Spleen (tissue), 13 donors: ENCODE measurements at regions of chr3 and their contacts with region 1.

Region 1: GRCh38 chr3:181709537-181710279 is 2.0 kb upstream of the SOX2 start:
- DNase-seq: peak; percentile 86
- H3K4me3 ChIP-seq: peak overlapping the region in 1 of 8 donors; percentile 20
- H3K27ac ChIP-seq: no peak overlapping the region
- H3K4me1 ChIP-seq: peaks cover 13 to 40% (median 35%) of the 10 kb centered on the region in 6 donors
- H3K27me3 ChIP-seq: peaks cover 21 to 100% (median 98%) of the 10 kb centered on the region in 7 donors
- CTCF ChIP-seq: peak in 10 of 11 experiments; percentile 51 to 84 (median 70)
- POLR2A ChIP-seq: no peak

Region 2: DNA sequence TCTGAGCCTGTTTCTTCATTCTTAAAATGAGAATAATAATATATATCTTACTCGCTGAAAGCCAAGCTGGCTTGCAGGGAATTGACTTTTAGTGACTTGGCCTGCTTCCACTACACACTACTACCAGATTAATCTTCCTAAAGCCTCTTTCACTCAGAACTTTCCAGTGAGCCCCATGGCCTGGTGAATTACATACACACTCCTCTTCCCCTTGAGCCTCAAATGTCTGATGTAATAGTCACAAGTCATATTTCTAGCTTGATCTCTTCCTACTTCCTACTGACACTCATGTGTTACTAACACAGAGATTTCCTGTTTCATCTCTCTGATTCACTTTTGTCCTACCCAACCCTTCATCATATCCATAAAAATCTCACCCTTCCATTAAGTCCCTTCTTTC is 80.7 kb before region 1 on chr3:
- intact Hi-C with region 1: no loop called
- DNase-seq: no peak
- H3K4me3 ChIP-seq: no peak overlapping the region
- H3K27ac ChIP-seq: no peak overlapping the region
- H3K4me1 ChIP-seq: no peaks in the 10 kb centered on the region
- H3K27me3 ChIP-seq: no peaks in the 10 kb centered on the region
- CTCF ChIP-seq: no peak
- POLR2A ChIP-seq: no peak

Region 3: DNA sequence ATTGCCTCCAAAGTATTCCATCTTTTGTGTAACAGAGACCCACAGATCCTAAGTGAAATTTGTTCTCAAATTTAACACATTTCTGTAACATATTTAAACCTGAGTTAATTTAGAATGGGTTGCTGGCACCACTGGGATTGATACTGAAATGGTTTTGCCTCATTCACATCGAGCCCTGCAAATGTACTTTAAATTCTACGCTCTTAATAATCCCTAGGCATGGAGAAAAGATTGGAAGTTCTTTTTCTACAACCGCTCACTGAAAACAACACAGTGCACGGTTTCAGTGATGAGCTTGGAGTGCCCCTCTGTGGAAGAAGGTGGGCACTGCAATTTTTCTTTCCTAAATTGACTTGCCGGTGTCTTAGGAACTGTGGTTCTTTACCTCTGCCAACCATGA is 973.7 kb after region 1 on chr3:
- intact Hi-C with region 1: loop called (anchors 5 kb)
- DNase-seq: no peak
- H3K4me3 ChIP-seq: peak overlapping the region in 4 of 8 donors; percentile 61 to 78 (median 64)
- H3K27ac ChIP-seq: no peak overlapping the region
- H3K4me1 ChIP-seq: peaks cover 15 to 24% (median 17%) of the 10 kb centered on the region in 6 donors
- H3K27me3 ChIP-seq: peaks cover 2 to 59% (median 22%) of the 10 kb centered on the region in 7 donors
- CTCF ChIP-seq: peak; percentile 48 to 84 (median 79)
- POLR2A ChIP-seq: no peak